ENCODE measurements at regions of chr5 and their contacts with region 1.

Region 1: DNA sequence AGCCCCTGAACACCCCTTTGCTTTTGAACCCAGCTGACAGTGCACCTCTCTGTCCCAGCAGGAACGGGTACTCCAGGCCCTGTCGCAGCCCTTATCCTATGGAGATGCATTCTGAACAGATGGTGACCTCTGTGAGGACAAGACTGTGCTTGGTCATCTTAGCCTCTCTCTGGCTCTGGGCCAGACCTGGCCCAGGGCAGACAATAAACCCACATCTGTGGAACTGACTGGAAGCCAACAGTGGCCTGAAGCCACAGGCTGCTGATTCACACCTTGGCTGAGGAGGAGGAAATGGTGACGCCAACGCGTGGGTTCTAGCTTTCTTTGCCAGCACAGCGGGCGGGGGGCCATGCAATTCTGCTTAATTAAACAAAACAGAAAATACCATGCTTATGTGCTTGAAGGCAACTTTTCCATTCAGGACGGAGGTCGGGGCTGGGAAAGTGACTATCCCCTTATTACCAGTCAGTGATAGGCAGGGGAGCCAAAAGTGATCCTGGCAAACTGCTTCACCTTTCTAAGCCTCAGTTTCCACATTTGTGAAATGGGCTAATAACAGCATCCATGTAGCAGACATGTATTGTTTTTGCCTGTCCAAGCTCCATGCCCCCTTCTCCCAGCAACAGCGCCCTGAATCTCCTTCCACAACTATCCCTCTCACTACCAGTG is 10.8 kb downstream of the SH3PXD2B start:
- DNase-seq: peak; percentile 88
- H3K4me3 Mint-ChIP-seq: no peak overlapping the region
- H3K27ac Mint-ChIP-seq: no peak overlapping the region
- H3K4me1 Mint-ChIP-seq: peaks cover 14% of the 10 kb centered on the region
- H3K27me3 Mint-ChIP-seq: peaks cover 22% of the 10 kb centered on the region

Region 2: GRCh38 chr5:172412724-172413286 is 30.8 kb before region 1 on chr5:
- CTCF ChIA-PET with region 1: no interaction called
- POLR2A ChIA-PET with region 1: no interaction called
- intact Hi-C with region 1: loop called (anchors 1 kb)
- DNase-seq: peak; percentile 51
- H3K4me3 Mint-ChIP-seq: no peak overlapping the region
- H3K27ac Mint-ChIP-seq: peak overlapping the region; percentile 2
- H3K4me1 Mint-ChIP-seq: peaks cover 22% of the 10 kb centered on the region
- H3K27me3 Mint-ChIP-seq: peaks cover 9% of the 10 kb centered on the region

Region 3: DNA sequence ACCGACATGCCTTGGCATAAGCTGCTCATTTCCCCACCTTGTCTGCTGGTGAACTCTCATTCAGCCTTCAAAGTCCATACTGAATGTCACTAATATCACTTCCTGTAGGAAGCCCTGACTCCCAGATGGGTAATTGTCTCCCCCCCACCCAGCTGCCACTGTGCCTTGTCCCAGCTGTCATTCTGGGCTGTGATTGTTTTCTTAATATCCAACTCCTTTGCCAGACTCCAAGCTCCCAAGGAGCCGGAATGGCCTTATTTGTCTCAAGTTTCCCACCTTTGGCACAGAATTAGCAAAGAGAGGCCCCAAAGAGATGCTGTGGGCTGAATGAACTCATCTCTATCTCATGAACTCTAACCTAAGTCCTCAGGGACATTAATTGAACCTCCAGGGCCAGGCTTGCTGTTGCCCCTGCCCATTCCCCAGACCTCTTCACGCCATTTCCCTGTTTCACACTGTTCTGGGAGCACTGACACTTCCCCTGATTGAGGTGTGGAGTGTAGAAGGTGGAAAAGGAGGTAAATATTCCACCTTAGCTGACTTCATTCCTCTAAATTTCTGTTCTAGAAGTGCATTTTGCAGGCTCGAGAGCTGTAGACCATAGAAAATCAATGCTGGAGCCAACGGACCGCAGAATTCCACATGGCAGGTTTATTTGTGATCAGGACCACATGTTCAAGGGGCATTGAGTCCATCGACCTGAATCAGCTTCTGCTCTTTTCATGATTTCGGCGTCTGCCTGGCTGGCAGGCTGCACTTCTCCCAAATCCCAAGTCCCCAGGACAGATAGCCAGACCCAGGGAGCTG is 15.6 kb after region 1 on chr5:
- CTCF ChIA-PET with region 1: interaction called, 14 read pairs
- POLR2A ChIA-PET with region 1: no interaction called
- intact Hi-C with region 1: no loop called
- DNase-seq: no peak
- H3K4me3 Mint-ChIP-seq: no peak overlapping the region
- H3K27ac Mint-ChIP-seq: no peak overlapping the region
- H3K4me1 Mint-ChIP-seq: peaks cover 12% of the 10 kb centered on the region
- H3K27me3 Mint-ChIP-seq: peaks cover 12% of the 10 kb centered on the region

Measured in activated CD4-positive, alpha-beta memory T cell treated with anti-CD3 and anti-CD28 coated beads for 36 hours (primary cell).